ENCODE measurements at regions of chr7 and their contacts with region 1.

Region 1: DNA sequence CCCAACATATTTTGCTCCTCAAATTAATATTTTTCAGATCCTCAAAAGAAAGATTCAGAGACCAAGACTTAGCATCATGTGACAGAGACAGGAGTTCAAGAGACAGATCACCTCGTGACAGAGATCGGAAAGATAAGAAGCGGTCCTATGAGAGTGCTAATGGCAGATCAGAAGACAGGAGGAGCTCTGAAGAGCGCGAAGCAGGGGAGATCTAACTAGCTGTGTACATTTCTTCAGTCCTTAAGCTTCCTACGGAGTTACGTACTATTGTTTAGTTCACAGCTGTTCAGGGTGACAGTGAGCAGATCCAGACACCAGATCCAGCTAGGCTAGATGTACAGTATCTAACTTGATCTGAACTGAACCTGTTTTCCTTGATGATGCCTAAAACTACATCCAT is 61.3 kb downstream of the KLRG2 start:
- DNase-seq: no peak
- ATAC-seq: no peak
- H3K4me3 ChIP-seq: no peak overlapping the region
- H3K27ac ChIP-seq: no peak overlapping the region
- H3K4me1 ChIP-seq: no peaks in the 10 kb centered on the region
- H3K27me3 ChIP-seq: no peaks in the 10 kb centered on the region
- CTCF ChIP-seq: no peak

Region 2: GRCh38 chr7:139370301-139370942 is 51.7 kb before region 1 on chr7:
- intact Hi-C with region 1: loop called in 1 of 2 experiments (anchors 5 kb)
- DNase-seq: no peak
- ATAC-seq: no peak
- H3K4me3 ChIP-seq: no peak overlapping the region
- H3K27ac ChIP-seq: no peak overlapping the region
- H3K4me1 ChIP-seq: peaks cover 86% of the 10 kb centered on the region
- H3K27me3 ChIP-seq: no peaks in the 10 kb centered on the region
- CTCF ChIP-seq: no peak

Measured in psoas muscle (tissue), 8 donors.